ENCODE measurements at regions of chr7 and their contacts with region 1.

Region 1: DNA sequence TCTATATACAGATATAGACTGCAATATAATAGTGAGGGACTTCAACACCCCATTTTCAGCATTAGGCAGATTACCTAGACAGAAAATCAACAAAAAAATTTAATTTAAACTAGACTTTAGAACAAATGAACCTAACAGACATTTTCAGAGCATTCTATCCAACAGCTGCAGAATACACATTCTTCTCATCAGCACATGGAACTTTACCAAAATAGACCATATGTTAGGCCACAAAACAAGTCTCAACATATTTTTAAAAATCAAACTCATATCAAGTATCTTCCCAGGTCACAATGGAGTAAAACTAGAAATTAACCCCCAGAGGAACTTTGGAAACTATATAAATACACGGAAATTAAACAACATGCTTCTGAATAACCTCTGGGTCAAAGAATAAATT is 169.6 kb downstream of the MTERF1 start:
- DNase-seq: no peak
- ATAC-seq: no peak
- H3K4me3 ChIP-seq: no peak overlapping the region
- H3K27ac ChIP-seq: no peak overlapping the region
- H3K4me1 ChIP-seq: no peaks in the 10 kb centered on the region
- H3K27me3 ChIP-seq: no peaks in the 10 kb centered on the region
- CTCF ChIP-seq: no peak

Region 2: GRCh38 chr7:91596287-91596852 is 114.5 kb before region 1 on chr7:
- intact Hi-C with region 1: no loop called
- DNase-seq: no peak
- ATAC-seq: no peak
- H3K4me3 ChIP-seq: no peak overlapping the region
- H3K27ac ChIP-seq: no peak overlapping the region
- H3K4me1 ChIP-seq: no peaks in the 10 kb centered on the region
- H3K27me3 ChIP-seq: no peaks in the 10 kb centered on the region
- CTCF ChIP-seq: no peak

Region 3: DNA sequence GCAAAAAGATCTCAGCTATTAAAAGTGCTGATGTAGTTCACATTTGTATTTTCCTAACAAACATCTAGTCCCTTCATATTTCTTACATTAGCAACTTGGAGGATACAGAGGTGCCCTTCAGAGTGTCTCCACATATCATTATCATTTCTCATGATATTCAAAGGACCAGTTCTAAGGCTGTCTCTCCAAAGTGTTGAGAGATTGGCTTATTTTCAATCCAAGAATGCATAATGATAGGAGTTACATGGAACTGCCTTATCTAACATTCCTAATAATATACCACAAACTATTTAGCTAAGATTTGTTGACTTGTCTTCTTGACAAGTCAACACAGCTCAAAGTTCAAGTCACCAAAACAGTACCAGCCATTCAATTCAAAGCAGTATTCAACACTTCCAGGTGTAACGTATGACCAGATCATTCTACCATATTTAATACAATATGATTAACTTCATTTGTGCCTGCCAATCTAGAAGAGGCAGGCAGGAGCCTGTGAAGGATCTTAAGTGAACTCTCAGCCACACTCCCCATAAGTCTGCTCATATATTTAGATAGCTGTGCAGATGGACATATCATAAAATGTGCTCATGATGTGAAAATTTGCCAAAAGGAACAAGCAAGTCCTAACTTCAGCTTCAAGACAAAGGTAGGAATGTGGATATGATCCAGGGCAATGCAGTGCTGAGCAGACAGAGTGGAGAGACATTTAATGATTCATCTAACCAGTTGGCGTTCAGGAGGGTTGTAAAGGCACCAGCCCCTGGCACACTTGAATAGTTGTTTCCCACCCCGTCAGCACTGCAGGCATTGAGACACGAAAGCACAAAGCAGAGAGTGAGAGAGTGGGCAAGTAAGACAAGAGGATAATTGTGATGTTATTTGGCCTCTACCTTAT is 61.3 kb after region 1 on chr7:
- intact Hi-C with region 1: loop called in 1 of 10 experiments (anchors 2 kb)
- DNase-seq: no peak
- ATAC-seq: peak in 6 of 8 donors; percentile 42 to 89 (median 66)
- H3K4me3 ChIP-seq: no peak overlapping the region
- H3K27ac ChIP-seq: peak overlapping the region in 5 of 10 donors; percentile 23 to 34 (median 31)
- H3K4me1 ChIP-seq: peaks cover 0 to 16% (median 5%) of the 10 kb centered on the region in 9 donors
- H3K27me3 ChIP-seq: no peaks in the 10 kb centered on the region
- CTCF ChIP-seq: no peak

Region 4: GRCh38 chr7:91973639-91974038 is 262.8 kb after region 1 on chr7:
- intact Hi-C with region 1: no loop called
- DNase-seq: no peak
- ATAC-seq: no peak
- H3K4me3 ChIP-seq: no peak overlapping the region
- H3K27ac ChIP-seq: no peak overlapping the region
- H3K4me1 ChIP-seq: peaks cover 0 to 21% (median 3%) of the 10 kb centered on the region in 9 donors
- H3K27me3 ChIP-seq: no peaks in the 10 kb centered on the region
- CTCF ChIP-seq: no peak

Measured in heart right ventricle (tissue), 16 donors.